Caki2 (cell line): ENCODE measurements at regions of chr2 and their contacts with region 1.

Region 1: GRCh38 chr2:196291873-196292800 is 120.8 kb upstream of the STK17B start:
- DNase-seq: peak; percentile 66

Region 2: DNA sequence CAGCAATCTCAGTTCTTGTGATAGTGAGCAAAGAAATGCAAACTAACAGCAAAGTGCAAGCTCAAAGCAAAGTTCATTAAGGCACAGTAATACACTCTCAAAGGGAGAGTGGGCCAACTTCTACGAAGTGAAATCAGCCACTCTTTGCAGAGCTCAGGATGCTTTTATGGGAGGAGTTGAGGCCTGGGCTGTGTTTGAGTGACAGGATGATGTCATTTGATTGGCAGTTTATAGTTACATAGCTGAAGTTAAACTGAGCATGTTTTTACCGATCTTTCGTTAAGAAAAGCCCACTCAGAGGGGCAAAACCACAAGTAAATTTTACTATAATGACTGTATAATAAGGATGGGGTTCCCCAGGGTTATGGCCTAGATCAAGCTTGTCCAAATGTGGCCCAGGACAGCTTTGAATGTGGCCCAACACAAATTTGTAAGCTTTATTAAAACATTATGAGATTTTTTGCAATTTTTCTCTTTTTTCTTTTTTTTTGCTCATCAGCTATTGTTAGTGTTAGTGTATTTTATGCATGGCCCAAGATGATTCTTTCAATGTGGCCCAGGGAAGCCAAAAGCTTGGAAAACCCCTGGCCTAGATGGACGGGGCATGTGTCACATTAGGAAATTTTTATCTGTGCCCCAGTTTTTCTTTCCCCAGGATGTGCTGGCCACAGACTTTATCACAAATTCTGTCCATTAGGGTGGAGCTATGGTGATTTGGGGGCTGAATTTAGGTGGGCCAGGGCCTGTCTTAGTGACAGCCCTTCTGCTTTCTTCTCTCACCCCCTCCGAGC is 215.2 kb before region 1 on chr2:
- in situ Hi-C with region 1: loop called (anchors 10 kb)
- DNase-seq: no peak

Region 3: DNA sequence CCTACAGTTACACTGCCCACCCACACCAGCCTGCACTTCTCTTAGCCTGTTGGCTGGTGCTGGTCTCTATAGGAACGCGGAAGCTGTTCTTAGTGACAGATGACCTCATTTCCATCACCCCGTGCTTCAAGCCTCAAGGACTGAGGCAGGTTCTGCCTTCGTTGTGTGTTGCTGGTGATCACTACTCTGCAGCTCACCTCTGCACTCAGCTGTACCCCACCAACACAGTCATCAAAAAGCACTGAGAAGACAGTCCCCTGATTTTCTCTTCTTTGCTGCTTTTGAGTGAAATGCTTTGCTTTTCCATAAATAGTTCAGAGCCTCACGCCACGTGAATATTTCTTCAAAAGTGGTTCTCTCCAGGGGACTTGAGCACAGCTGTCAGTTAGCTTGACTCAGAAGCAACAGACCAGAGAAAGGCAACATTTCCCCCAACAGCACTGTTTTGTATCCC is 121.7 kb after region 1 on chr2:
- in situ Hi-C with region 1: no loop called
- DNase-seq: no peak

Region 4: DNA sequence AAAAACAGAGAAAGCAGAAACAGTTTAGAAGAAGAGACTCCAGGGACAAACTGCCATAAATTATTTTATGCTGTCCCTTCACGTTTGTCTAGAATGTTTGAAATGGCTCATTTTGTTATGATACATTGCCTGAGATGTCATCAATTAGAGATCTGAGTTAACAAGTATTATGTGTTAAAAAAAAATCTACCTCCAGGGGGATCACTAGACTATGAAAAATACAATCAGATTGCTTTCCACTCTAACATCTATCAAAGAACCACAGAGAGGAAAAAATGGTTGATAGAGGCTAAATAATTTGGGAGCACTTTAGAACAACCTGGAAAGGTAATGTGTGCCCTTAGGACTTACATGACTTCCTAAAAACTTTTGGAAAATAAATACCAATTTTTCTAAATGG is 243.6 kb after region 1 on chr2:
- in situ Hi-C with region 1: no loop called
- DNase-seq: no peak